IMR-90 (cell line): ENCODE measurements at regions of chr18 and their contacts with region 1.

Region 1: DNA sequence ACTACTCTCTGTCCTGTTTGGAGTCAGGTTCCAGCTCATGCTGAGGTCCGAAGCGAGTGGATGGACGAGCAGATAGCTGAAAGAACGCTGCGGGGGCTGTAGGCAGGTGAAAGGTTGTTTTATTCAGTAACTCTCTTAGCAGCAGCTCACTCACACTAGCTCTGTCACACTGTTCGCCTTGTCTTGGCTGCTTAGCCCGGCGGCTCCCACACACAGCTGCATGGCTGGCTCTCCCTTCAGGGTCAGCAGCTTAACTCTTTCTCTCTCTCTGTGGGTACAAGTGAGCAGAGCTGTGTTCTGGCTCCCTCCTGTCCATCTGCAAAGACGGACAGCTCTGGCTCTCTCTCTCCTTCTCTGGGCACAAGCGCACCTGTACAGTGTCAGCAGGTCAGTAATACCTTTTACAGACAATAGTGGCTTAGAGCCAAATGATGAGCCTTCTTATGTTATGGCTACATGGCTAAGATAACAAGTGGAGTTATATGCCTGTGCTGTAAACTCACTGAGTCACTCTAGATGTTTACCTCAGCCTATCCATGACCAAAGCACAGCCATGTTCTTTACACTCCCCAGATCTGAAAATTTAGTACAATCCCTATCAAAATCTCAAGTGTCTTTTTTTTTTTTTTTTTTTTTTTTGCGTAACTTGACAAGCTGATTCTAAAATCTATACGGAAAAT is 149.3 kb downstream of the GALNT1 start:
- DNase-seq: peak; percentile 4
- ATAC-seq: peak; percentile 57; the same call in 1 of the 2 replicates
- H3K4me3 ChIP-seq: no peak overlapping the region
- H3K27ac ChIP-seq: no peak overlapping the region
- H3K4me1 ChIP-seq: no peaks in the 10 kb centered on the region
- H3K27me3 ChIP-seq: peaks cover 2% of the 10 kb centered on the region; the same call in 1 of the 2 replicates
- CTCF ChIP-seq: no peak
- POLR2A ChIP-seq: no peak
- RAD21 ChIP-seq: no peak

Region 2: DNA sequence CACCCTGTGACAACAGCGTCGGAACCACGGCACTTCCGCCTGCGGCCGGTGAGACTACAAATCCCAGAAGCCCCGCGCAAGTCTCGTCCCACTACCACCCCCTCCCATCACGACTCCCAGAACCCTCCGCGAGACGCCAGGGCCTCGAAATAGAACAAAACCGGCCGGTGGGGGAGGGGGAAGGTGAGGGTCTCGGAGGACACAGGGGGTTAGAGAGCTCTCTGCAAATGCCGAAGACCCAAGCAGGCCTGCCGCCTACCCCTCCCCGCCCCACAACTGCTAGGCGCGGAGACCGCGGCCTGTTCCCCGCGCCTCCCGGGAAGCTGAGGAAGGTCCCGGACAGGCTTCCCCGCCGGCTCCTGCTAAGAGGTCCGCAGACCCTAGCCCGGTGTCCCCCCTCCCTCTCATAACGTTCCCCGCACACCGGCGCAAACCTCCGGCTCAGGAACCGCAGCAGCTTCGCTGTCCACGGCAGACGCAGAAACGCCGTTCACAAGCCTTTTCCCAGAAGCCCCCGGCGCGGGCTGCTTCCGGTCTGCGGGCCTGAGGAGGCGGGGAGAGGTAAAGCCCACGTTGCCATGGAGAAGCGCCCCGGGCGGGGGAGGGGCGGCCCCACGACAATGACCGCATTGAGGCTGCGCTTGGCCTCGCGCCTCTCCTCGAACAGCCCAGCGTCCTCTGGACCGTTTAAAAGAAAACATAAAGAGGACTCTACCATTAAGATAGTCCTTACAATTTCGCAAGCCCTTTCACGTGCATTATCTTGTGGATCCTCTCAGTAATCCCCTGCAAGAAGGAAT is 386.7 kb before region 1 on chr18 and contains the start of gene ZNF24:
- CTCF ChIA-PET with region 1: no interaction called
- POLR2A ChIA-PET with region 1: interaction called, 11 read pairs
- dilution Hi-C with region 1: no loop called
- in situ Hi-C with region 1: no loop called
- intact Hi-C with region 1: no loop called
- DNase-seq: peak; percentile 87
- ATAC-seq: peak; percentile 93
- H3K4me3 ChIP-seq: peak within 1 kb of the TSS; percentile 66
- H3K27ac ChIP-seq: peak within 1 kb of the TSS; percentile 84
- H3K4me1 ChIP-seq: peaks cover 2% of the 10 kb centered on the region; the same call in 1 of the 2 replicates
- H3K27me3 ChIP-seq: no peaks in the 10 kb centered on the region
- CTCF ChIP-seq: no peak
- POLR2A ChIP-seq: peak; percentile 93
- RAD21 ChIP-seq: no peak
- total RNA-seq, gene ZNF24: 20.8 and 38.3 TPM in 2 replicates

Region 3: DNA sequence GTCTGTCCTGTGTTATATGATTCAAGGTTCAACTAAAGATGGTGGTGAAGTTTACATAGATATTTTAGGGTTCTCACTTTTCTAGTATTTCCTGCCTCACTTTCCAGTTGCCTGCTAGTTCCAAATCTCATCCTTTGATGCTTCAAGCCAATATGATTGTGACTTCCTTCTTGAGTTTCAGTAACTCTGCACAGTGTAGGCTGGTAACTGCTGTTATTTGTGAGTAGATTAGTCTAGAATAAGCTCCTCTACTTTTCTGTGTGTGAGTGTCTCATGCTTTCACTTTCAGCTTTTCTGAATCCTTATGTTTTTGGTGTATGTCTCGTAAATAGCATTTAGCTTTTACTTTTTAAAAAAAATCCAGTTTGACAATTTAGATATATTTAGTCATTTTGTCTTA is 106.7 kb before region 1 on chr18:
- CTCF ChIA-PET with region 1: no interaction called
- POLR2A ChIA-PET with region 1: no interaction called
- dilution Hi-C with region 1: no loop called
- in situ Hi-C with region 1: no loop called
- intact Hi-C with region 1: no loop called
- DNase-seq: no peak
- ATAC-seq: no peak
- H3K4me3 ChIP-seq: no peak overlapping the region
- H3K27ac ChIP-seq: no peak overlapping the region
- H3K4me1 ChIP-seq: peaks cover 3% of the 10 kb centered on the region
- H3K27me3 ChIP-seq: no peaks in the 10 kb centered on the region
- CTCF ChIP-seq: no peak
- POLR2A ChIP-seq: no peak
- RAD21 ChIP-seq: no peak